ENCODE measurements at regions of chr9 and their contacts with region 1.

Region 1: DNA sequence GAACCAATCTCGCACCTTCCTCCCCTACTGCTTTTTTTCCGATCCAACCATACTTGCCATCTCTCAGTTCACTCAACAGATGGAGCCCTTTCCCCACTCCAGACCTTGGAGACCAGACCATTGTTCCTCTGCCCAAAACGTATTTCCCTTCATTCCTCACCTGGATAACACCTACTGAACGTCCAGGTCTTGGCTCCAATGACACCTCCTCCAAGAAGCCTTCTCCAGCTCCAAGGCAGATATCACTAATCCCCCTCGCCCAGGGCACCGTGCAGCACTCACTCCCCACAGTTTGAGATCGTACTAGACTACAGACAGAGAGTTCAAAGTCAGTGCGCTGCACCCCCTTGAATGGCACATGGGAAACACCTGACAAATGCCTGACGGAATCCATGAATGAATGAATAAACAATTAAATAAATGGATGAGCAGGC is 47.1 kb upstream of the AKNA start:
- DNase-seq: no peak
- H3K4me3 ChIP-seq: no peak overlapping the region
- H3K27ac ChIP-seq: no peak overlapping the region
- H3K27me3 ChIP-seq: peaks cover 23% of the 10 kb centered on the region
- CTCF ChIP-seq: peak; percentile 75

Region 2: GRCh38 chr9:114291064-114291474 is 143.8 kb before region 1 on chr9:
- CTCF ChIA-PET with region 1: no interaction called
- POLR2A ChIA-PET with region 1: no interaction called
- DNase-seq: no peak
- H3K4me3 ChIP-seq: no peak overlapping the region
- H3K27ac ChIP-seq: no peak overlapping the region
- H3K27me3 ChIP-seq: no peaks in the 10 kb centered on the region
- CTCF ChIP-seq: peak; percentile 83

Region 3: GRCh38 chr9:114413861-114414301 is 21.0 kb before region 1 on chr9:
- CTCF ChIA-PET with region 1: interaction called, 13 read pairs
- POLR2A ChIA-PET with region 1: interaction called, 6 read pairs
- DNase-seq: no peak
- H3K4me3 ChIP-seq: no peak overlapping the region
- H3K27ac ChIP-seq: no peak overlapping the region
- H3K27me3 ChIP-seq: peaks cover 2% of the 10 kb centered on the region
- CTCF ChIP-seq: no peak

Region 4: DNA sequence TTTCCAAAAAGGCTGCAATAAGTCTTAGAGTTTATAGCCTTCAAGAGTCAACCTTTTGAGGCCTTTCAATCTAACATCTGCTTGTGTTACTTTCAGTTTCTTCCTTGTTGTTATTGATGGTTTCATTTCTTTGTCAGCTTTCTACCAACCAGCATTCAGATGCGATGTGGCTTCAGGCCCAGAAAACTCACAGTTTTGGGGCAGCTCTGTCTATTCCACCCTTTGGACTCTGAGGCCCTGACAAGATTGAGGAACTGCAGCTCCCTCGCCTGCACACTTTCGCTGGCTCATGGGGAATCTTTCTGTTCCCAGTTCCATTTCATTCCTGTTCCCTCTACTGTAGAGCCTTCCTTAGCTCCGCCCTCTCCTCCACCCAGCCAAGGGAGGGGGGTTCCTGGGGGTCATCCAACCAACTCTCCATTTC is 83.7 kb after region 1 on chr9:
- CTCF ChIA-PET with region 1: no interaction called
- POLR2A ChIA-PET with region 1: no interaction called
- DNase-seq: no peak
- H3K4me3 ChIP-seq: no peak overlapping the region
- H3K27ac ChIP-seq: no peak overlapping the region
- H3K27me3 ChIP-seq: peaks cover 19% of the 10 kb centered on the region
- CTCF ChIP-seq: no peak

Region 5: DNA sequence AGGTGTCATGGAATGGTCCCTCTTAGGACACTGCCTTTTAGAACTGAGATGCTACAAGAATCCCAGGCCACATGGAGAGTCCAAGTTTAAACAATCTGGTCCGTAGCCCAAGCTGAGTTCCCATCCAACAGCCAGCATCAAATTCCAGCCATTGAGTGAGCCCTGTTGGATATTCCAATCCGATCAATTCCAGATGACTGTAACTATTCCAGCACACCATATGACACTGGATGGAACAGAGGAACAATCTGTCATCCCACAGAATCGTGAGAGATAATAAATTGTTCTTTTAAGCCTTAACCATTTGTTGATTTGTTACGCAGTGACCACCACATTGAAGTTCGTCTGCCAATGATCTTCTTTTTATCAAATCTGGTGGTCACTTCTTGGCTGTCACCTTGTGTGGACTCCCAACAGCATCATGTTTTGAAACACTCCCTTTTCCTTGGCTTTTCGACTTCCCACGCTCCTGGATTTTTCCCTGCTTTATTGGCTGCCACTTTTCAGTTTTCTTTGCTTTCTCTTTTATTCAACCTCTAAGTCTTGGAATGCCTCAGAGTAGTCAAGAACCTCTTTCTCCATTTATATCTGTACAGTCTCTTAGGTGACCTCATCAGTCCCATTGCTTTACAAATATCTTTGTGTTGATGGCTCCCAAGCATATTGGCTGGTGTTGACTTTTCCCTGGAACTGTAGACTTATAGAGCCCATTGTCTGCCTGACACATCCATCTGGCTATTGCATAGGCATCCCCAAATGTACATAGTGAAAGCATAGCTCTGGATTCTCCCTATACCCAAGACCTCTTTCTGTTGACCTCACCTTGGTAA is 324.8 kb after region 1 on chr9:
- CTCF ChIA-PET with region 1: no interaction called
- POLR2A ChIA-PET with region 1: no interaction called
- DNase-seq: no peak
- H3K4me3 ChIP-seq: no peak overlapping the region
- H3K27ac ChIP-seq: no peak overlapping the region
- H3K27me3 ChIP-seq: peaks cover 19% of the 10 kb centered on the region
- CTCF ChIP-seq: no peak

Measured in AG04450 (cell line).